ENCODE measurements at regions of chr17 and their contacts with region 1.

Region 1: DNA sequence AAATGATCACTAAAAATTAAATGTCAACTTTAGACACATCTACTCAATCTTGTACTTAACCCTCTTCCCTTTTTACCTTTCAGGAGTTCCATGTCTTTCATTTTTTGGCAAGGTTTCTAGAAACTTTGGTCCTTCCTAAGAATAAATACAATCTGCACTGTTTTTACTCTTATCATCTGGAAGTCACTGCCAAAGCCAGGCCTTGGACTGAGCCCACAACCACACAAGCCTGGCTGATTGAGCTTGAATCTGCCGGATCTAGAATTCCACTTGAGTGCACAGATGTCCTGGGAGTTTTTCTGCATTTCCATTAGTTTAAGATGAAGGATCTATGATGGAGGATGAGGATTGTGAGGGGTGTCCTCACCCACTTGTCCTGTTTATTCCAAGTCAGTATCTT is 126.1 kb downstream of the VPS53 start:
- DNase-seq: no peak
- H3K4me3 ChIP-seq: no peak overlapping the region
- H3K27ac ChIP-seq: no peak overlapping the region
- H3K4me1 ChIP-seq: no peaks in the 10 kb centered on the region
- H3K27me3 ChIP-seq: no peaks in the 10 kb centered on the region
- CTCF ChIP-seq: no peak
- POLR2A ChIP-seq: no peak

Region 2: DNA sequence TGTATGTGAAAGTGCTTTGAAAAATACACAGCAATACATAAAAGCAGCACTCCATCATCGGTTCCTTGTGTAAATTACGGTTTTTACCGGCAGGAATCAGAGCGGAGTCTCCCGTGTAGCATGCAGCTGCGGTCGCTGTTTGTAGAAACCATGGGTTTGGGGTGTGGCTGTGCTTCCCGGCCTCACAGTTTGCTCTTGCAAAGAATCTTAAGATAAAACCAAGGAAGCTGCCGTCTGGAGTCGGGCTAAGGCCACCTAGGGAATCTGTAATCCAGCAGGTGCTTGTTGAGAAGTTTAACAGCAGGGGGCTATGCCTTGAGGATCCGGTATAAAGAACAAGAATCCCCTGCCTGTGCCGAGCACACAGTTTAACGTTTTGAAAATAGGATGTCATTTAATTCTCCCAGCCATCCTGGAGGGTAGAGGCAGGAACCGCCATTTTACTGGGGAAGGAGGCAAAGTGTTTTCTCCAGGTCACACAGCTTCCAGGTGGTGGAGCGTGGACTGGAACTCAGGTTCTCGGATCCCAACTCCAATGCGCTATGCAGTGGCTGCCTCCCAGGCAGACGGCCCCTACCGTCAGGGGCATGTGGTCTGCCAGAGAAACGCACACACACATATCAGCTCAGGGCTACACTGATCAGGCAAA is 137.9 kb after region 1 on chr17:
- intact Hi-C with region 1: no loop called
- DNase-seq: no peak
- H3K4me3 ChIP-seq: no peak overlapping the region
- H3K27ac ChIP-seq: no peak overlapping the region
- H3K4me1 ChIP-seq: peaks cover 0 to 3% of the 10 kb centered on the region in 2 donors
- H3K27me3 ChIP-seq: no peaks in the 10 kb centered on the region
- CTCF ChIP-seq: no peak
- POLR2A ChIP-seq: no peak

Region 3: GRCh38 chr17:1422907-1423306 is 834.4 kb after region 1 on chr17:
- intact Hi-C with region 1: loop called (anchors 10 kb)
- DNase-seq: no peak
- H3K4me3 ChIP-seq: no peak overlapping the region
- H3K27ac ChIP-seq: no peak overlapping the region
- H3K4me1 ChIP-seq: no peaks in the 10 kb centered on the region
- H3K27me3 ChIP-seq: no peaks in the 10 kb centered on the region
- CTCF ChIP-seq: no peak
- POLR2A ChIP-seq: no peak